IMR-90 (cell line): ENCODE measurements at regions of chr9 and their contacts with region 1.

Region 1: DNA sequence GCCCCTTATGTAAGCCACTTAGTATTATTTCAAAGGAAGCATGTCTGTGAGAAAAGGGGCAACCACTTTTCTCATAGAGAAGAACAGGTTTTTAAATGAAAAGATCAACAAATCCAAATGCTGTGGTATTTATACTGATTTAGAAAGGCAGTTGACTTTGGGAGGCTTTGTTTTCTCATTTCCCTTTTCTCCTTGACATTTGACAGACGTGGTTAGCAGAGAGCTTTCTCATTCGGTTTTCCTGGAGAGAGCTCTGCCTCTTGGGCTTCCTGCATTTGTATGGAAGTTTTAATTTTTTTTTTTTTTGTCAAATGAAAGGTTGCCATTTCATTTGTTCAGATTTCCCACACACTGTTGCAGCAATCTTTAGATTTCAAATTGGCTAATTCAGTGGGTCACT is 62.5 kb downstream of the EXOSC2 start:
- DNase-seq: no peak
- ATAC-seq: no peak
- H3K4me3 ChIP-seq: no peak overlapping the region
- H3K27ac ChIP-seq: no peak overlapping the region
- H3K4me1 ChIP-seq: peaks cover 8% of the 10 kb centered on the region; the same call in 1 of the 2 replicates
- H3K27me3 ChIP-seq: no peaks in the 10 kb centered on the region
- CTCF ChIP-seq: no peak
- POLR2A ChIP-seq: no peak
- RAD21 ChIP-seq: no peak

Region 2: DNA sequence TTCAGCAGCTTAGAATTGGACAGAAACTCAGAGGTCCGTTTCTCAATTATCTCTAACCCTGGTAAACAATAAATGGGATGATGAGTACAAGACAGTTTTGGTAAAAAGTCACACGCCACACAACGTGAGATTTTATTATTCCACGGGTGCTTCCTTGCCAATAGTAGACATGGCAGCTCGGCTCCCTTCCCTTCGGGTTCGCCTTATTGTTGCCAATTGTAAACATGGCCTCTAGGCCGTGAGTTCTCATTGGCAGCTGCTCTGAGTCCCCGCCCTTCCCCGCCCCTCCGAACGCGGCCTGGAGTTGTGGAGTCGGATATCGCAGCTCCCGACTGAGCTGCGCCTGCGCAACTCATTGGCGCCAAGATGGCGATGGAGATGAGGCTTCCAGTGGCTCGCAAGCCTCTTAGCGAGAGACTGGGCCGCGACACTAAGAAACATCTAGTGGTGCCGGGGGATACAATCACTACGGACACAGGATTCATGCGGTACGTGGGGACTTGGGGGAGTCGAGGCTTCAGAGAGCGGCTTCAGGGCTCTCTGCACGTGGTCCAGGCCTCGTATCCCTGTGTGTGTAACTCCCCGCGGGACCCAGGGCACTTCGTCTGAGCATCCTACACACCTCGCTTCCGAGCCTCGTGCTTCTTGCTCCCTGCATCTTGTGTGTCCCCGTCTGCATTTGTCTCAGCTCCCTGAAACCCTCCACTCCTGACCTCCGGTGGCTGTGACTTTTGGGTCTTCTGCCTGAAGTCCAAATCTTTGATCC is 62.4 kb before region 1 on chr9 and contains the start of gene EXOSC2:
- CTCF ChIA-PET with region 1: no interaction called
- POLR2A ChIA-PET with region 1: interaction called, 18 read pairs
- dilution Hi-C with region 1: no loop called
- in situ Hi-C with region 1: no loop called
- intact Hi-C with region 1: no loop called
- DNase-seq: peak; percentile 98
- ATAC-seq: peak; percentile 92
- H3K4me3 ChIP-seq: peak within 1 kb of the TSS; percentile 66
- H3K27ac ChIP-seq: peak within 1 kb of the TSS; percentile 78
- H3K4me1 ChIP-seq: peaks cover 4% of the 10 kb centered on the region
- H3K27me3 ChIP-seq: no peaks in the 10 kb centered on the region
- CTCF ChIP-seq: no peak
- POLR2A ChIP-seq: peak; percentile 85
- RAD21 ChIP-seq: no peak
- total RNA-seq, gene EXOSC2: 47.5 and 48.6 TPM in 2 replicates

Region 3: GRCh38 chr9:130720762-130721161 is 35.3 kb before region 1 on chr9:
- CTCF ChIA-PET with region 1: interaction called, 4 read pairs
- POLR2A ChIA-PET with region 1: no interaction called
- dilution Hi-C with region 1: no loop called
- in situ Hi-C with region 1: loop called (anchors 5 kb)
- intact Hi-C with region 1: no loop called
- DNase-seq: no peak
- ATAC-seq: no peak
- H3K4me3 ChIP-seq: no peak overlapping the region
- H3K27ac ChIP-seq: no peak overlapping the region
- H3K4me1 ChIP-seq: no peaks in the 10 kb centered on the region
- H3K27me3 ChIP-seq: no peaks in the 10 kb centered on the region
- CTCF ChIP-seq: no peak
- POLR2A ChIP-seq: no peak
- RAD21 ChIP-seq: no peak

Region 4: GRCh38 chr9:130741831-130742449 is 14.1 kb before region 1 on chr9:
- CTCF ChIA-PET with region 1: interaction called, 3 read pairs
- POLR2A ChIA-PET with region 1: interaction called, 15 read pairs
- dilution Hi-C with region 1: no loop called
- in situ Hi-C with region 1: no loop called
- intact Hi-C with region 1: no loop called
- DNase-seq: peak; percentile 88
- ATAC-seq: peak; percentile 77
- H3K4me3 ChIP-seq: no peak overlapping the region
- H3K27ac ChIP-seq: no peak overlapping the region; the same call in 1 of the 2 replicates
- H3K4me1 ChIP-seq: peaks cover 7% of the 10 kb centered on the region
- H3K27me3 ChIP-seq: no peaks in the 10 kb centered on the region
- CTCF ChIP-seq: no peak
- POLR2A ChIP-seq: no peak
- RAD21 ChIP-seq: no peak